ENCODE measurements at regions of chr12 and their contacts with region 1.

Region 1: GRCh38 chr12:9792961-9793617 is 32.4 kb upstream of the CD69 start:
- DNase-seq: no peak
- ATAC-seq: no peak
- H3K4me3 ChIP-seq: no peak overlapping the region
- H3K27ac ChIP-seq: no peak overlapping the region
- H3K4me1 ChIP-seq: no peaks in the 10 kb centered on the region
- H3K27me3 ChIP-seq: peaks cover 4% of the 10 kb centered on the region

Region 2: GRCh38 chr12:9237286-9237685 is 555.8 kb before region 1 on chr12:
- intact Hi-C with region 1: no loop called
- DNase-seq: no peak
- ATAC-seq: no peak
- H3K4me3 ChIP-seq: no peak overlapping the region
- H3K27ac ChIP-seq: no peak overlapping the region
- H3K4me1 ChIP-seq: no peaks in the 10 kb centered on the region
- H3K27me3 ChIP-seq: no peaks in the 10 kb centered on the region

Region 3: GRCh38 chr12:9757433-9758025 is 35.6 kb before region 1 on chr12:
- intact Hi-C with region 1: loop called in 1 of 4 experiments (anchors 5 kb)
- DNase-seq: no peak
- ATAC-seq: no peak
- H3K4me3 ChIP-seq: no peak overlapping the region
- H3K27ac ChIP-seq: no peak overlapping the region
- H3K4me1 ChIP-seq: no peaks in the 10 kb centered on the region
- H3K27me3 ChIP-seq: no peaks in the 10 kb centered on the region

Region 4: GRCh38 chr12:9925708-9926393 is 132.8 kb after region 1 on chr12:
- intact Hi-C with region 1: no loop called
- DNase-seq: no peak
- ATAC-seq: peak; percentile 48 to 52
- H3K4me3 ChIP-seq: peak overlapping the region; percentile 22
- H3K27ac ChIP-seq: no peak overlapping the region
- H3K4me1 ChIP-seq: no peaks in the 10 kb centered on the region
- H3K27me3 ChIP-seq: no peaks in the 10 kb centered on the region

Region 5: GRCh38 chr12:10016881-10017280 is 223.8 kb after region 1 on chr12:
- intact Hi-C with region 1: no loop called
- DNase-seq: no peak
- ATAC-seq: no peak
- H3K4me3 ChIP-seq: no peak overlapping the region
- H3K27ac ChIP-seq: no peak overlapping the region
- H3K4me1 ChIP-seq: no peaks in the 10 kb centered on the region
- H3K27me3 ChIP-seq: no peaks in the 10 kb centered on the region

Measured in right cardiac atrium (tissue), 5 donors.